Common myeloid progenitor, CD34-positive (primary cell): ENCODE measurements at regions of chr1 and their contacts with region 1.

Region 1: GRCh38 chr1:197343663-197344273 is 75.7 kb downstream of the CRB1 start:
- DNase-seq: no peak
- H3K4me3 ChIP-seq: no peak overlapping the region
- H3K27ac ChIP-seq: no peak overlapping the region
- H3K4me1 ChIP-seq: peaks cover 0 to 11% (median 4%) of the 10 kb centered on the region in 4 experiments
- H3K27me3 ChIP-seq: peaks cover 0 to 19% (median 0%) of the 10 kb centered on the region in 5 experiments

Region 2: DNA sequence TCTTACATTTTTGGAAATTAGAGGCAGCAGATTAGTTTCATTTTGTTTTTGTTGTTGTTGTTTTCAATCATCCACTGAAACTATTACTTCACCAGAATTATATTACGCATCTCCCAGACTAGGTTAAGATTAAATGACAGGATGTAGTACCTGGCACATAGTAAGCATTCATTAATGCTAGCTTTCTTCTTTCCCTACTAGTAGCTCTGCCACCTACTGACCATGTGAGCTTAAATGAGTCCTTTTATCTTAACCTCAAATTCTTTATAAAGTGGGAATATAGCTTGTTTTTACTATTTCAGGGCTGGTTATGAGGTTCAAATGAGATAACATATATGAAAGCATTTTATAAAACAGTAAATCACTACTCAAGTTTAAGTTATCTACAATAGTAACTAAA is 187.1 kb before region 1 on chr1:
- CTCF ChIA-PET with region 1: no interaction called
- POLR2A ChIA-PET with region 1: no interaction called
- DNase-seq: no peak
- H3K4me3 ChIP-seq: no peak overlapping the region
- H3K27ac ChIP-seq: no peak overlapping the region
- H3K4me1 ChIP-seq: no peaks in the 10 kb centered on the region
- H3K27me3 ChIP-seq: no peaks in the 10 kb centered on the region

Region 3: DNA sequence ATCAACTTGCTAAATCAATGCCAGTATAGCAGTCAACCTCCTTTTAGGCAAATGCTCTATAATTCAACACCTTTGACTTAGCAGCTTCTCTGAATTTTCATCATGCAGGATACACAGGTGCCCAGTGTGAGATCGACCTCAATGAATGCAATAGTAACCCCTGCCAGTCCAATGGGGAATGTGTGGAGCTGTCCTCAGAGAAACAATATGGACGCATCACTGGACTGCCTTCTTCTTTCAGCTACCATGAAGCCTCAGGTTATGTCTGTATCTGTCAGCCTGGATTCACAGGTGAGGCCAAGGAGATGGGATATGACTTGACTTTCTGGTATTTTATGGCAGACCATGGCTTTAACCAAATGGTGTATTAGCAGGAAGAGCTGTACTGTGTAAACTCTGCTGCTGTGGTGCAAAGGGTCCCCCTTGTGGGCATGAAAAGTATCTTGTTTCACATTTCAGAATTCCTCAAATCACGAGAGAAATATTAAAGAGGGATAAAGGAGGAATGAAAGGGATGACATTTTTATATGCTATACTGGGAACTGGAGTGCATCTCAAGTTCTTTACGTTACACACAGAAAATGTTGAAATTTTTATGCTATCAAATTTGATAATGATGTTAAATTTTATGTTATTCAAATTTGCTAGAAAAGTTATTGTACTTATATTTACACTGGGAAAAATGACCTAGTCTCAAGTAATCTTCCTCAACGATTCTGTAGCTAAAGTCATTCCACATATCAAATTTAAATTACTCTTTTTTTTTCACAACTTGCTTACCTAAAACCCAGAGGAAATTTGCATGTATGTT is 13.2 kb after region 1 on chr1:
- CTCF ChIA-PET with region 1: interaction called, 15 read pairs
- POLR2A ChIA-PET with region 1: no interaction called
- DNase-seq: peak; percentile 40 to 71 (median 60)
- H3K4me3 ChIP-seq: no peak overlapping the region
- H3K27ac ChIP-seq: no peak overlapping the region
- H3K4me1 ChIP-seq: no peaks in the 10 kb centered on the region
- H3K27me3 ChIP-seq: no peaks in the 10 kb centered on the region

Region 4: GRCh38 chr1:197388801-197389200 is 45.0 kb after region 1 on chr1:
- CTCF ChIA-PET with region 1: no interaction called
- POLR2A ChIA-PET with region 1: no interaction called
- DNase-seq: no peak
- H3K4me3 ChIP-seq: no peak overlapping the region
- H3K27ac ChIP-seq: no peak overlapping the region
- H3K4me1 ChIP-seq: peaks cover 0 to 11% (median 8%) of the 10 kb centered on the region in 4 experiments
- H3K27me3 ChIP-seq: no peaks in the 10 kb centered on the region

Region 5: DNA sequence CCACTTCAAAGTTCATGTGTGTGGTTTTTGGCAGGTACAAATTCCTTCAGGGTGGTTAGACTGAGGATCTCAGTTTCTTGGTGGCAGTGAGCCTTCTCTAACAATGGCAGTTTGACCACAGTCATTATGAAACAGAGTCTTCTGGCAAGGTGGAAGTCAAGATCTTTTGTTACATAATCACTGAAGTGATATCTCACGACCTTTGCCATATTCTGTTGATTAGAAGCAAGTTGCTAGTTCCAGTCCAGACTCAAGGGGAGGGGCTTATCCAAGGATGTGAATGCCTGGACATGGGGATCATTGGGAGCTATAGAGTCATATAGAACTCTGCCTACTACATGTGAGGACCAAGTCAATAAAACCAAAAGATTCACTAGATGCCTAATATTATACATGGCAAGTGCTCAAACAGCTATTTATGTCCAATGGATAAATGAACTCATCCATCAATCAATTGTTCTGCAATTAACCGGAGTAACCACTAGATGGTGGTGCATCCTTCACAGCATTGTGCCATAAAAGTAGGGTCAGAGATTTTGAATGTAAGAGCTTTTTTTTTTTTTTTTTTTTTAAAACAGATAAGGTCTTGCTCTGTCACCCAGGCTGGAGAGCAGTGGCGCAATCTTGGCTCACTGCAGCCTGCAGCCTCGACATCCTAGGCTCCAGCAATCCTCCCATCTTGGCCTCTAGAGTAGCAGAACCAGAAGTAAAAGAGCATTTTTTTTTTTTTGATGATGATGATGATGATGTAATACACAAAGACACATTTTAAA is 56.2 kb after region 1 on chr1:
- CTCF ChIA-PET with region 1: no interaction called
- POLR2A ChIA-PET with region 1: no interaction called
- DNase-seq: peak; percentile 59 to 79 (median 78)
- H3K4me3 ChIP-seq: no peak overlapping the region
- H3K27ac ChIP-seq: no peak overlapping the region
- H3K4me1 ChIP-seq: peaks cover 0 to 4% (median under 1%) of the 10 kb centered on the region in 4 experiments
- H3K27me3 ChIP-seq: no peaks in the 10 kb centered on the region